HEK293 (cell line): ENCODE measurements at regions of chr9 and their contacts with region 1.

Region 1: GRCh38 chr9:129177791-129178559 is at the start of gene IER5L:
- H3K4me3 ChIP-seq: peak within 1 kb of the TSS; percentile 64
- H3K27ac ChIP-seq: peak within 1 kb of the TSS; percentile 65; the same call in 1 of the 2 replicates
- H3K4me1 ChIP-seq: peaks cover 7% of the 10 kb centered on the region
- CTCF ChIP-seq: peak; percentile 73

Region 2: GRCh38 chr9:128881901-128882681 is 295.9 kb before region 1 on chr9 and contains the starts of genes KYAT1 and LRRC8A:
- CTCF ChIA-PET with region 1: no interaction called
- POLR2A ChIA-PET with region 1: no interaction called
- H3K4me3 ChIP-seq: peak within 1 kb of the TSS; percentile 87
- H3K27ac ChIP-seq: peak within 1 kb of the TSS; percentile 55
- H3K4me1 ChIP-seq: no peaks in the 10 kb centered on the region
- CTCF ChIP-seq: no peak

Region 3: GRCh38 chr9:129131300-129132145 is 46.5 kb before region 1 on chr9:
- CTCF ChIA-PET with region 1: interaction called, 34 read pairs
- POLR2A ChIA-PET with region 1: interaction called, 13 read pairs
- H3K4me3 ChIP-seq: no peak overlapping the region
- H3K27ac ChIP-seq: no peak overlapping the region
- H3K4me1 ChIP-seq: no peaks in the 10 kb centered on the region
- CTCF ChIP-seq: peak; percentile 86

Region 4: DNA sequence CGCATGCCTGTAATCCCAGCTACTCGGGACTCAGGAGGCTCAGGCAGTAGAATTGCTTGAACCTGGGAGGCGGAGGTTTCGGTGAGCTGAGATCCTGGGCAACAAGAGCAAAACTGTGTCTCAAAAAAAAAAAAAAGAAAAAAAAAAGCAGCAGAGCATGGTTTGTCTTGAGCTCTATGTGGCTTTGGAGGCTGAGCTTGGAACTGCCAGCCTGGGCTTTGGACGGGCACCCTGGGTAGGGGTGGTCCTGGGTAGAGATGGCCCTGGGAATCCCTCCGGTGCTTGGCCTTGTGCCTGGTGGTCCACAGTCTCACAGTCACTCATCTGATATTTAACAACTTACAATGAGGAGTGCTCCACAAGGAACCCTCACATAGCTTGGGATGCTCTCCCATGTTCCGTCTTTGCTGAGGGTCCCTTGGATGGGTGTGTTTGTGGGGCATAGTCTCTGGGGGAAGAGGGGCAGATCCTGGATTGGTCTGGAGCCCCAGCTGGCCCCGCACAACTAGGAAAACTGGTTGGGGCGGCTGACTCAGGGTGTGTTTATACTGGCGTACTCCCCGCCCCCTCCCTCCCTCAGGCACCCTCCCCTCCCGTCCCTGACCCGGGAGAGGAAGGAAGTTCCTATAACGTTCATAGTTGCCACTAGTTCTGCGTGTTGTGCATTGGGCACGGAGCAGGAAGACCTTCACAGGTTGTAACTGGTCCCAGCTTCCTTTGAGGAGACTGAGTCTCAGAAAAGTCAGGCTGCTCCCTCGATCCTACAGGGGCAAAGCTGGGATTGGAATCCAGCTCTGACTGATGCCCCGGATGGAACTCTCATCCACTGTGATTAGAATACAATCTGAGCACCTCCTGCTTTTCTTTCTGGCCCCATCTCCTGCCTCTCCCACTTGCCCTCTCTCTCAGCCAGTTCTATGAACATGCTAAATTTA is 11.1 kb before region 1 on chr9:
- CTCF ChIA-PET with region 1: interaction called, 22 read pairs
- POLR2A ChIA-PET with region 1: interaction called, 19 read pairs
- H3K4me3 ChIP-seq: peak overlapping the region; percentile 0; the same call in 1 of the 2 replicates
- H3K27ac ChIP-seq: no peak overlapping the region
- H3K4me1 ChIP-seq: no peaks in the 10 kb centered on the region; the same call in 1 of the 2 replicates
- CTCF ChIP-seq: no peak

Region 5: GRCh38 chr9:129237195-129237611 is 59.2 kb after region 1 on chr9:
- CTCF ChIA-PET with region 1: interaction called, 6 read pairs
- POLR2A ChIA-PET with region 1: interaction called, 10 read pairs
- H3K4me3 ChIP-seq: no peak overlapping the region
- H3K27ac ChIP-seq: no peak overlapping the region
- H3K4me1 ChIP-seq: no peaks in the 10 kb centered on the region
- CTCF ChIP-seq: no peak

Region 6: GRCh38 chr9:129333953-129334724 is 156.2 kb after region 1 on chr9:
- CTCF ChIA-PET with region 1: interaction called, 5 read pairs
- POLR2A ChIA-PET with region 1: interaction called, 21 read pairs
- H3K4me3 ChIP-seq: peak overlapping the region; percentile 10; the same call in 1 of the 2 replicates
- H3K27ac ChIP-seq: peak overlapping the region; percentile 4; the same call in 1 of the 2 replicates
- H3K4me1 ChIP-seq: no peaks in the 10 kb centered on the region; the same call in 1 of the 2 replicates
- CTCF ChIP-seq: 0 out of 2 replicates have a peak, but pooled peaks have one; percentile 16

Region 7: DNA sequence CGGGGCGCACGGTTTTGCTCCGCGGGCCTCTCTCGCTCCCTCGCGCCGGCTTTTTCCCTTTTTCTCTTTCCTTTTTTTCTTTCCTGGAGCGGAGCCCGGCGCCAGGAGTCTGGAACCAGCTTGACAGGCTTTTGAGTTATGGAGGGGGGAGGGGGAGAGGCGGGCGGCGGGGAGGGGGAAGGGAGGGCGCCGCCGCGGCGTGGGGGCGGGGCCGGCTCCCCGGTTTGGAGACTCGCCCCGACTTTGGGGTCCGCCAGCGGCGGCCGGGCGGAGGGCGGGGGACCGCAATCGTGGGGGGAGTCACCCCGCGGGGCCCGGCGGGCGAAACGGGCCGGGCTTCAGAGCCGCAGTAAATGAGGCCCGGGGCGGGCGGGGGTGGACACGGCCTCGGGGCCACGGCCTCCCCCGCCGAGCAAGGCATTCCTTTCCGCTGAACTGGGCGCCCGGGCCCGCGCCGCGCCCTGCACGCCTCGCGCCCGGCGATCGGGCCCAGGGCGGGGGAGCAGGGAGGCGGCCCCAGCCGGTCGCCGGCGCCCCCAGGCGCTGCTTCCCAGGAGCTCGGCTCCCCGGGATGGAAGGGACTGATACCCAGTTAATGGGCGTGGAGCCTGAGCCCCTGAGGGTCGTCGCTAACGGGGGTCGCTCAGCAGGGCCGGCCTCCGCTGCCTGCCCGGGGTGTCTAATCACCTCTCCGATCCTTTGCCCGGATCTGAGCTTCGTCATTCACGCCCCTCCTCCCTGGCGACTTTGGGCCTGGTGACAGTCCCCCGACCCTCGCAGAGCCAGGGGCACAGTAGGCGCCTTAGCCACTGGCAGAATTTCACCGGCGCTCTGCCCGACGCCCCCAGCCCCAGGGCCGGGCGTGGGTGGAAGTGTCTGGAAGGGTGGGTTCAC is 304.8 kb after region 1 on chr9:
- CTCF ChIA-PET with region 1: interaction called, 4 read pairs
- POLR2A ChIA-PET with region 1: interaction called, 20 read pairs
- H3K4me3 ChIP-seq: peak overlapping the region; percentile 29
- H3K27ac ChIP-seq: peak overlapping the region; percentile 87
- H3K4me1 ChIP-seq: no peaks in the 10 kb centered on the region; the same call in 1 of the 2 replicates
- CTCF ChIP-seq: no peak

Region 8: DNA sequence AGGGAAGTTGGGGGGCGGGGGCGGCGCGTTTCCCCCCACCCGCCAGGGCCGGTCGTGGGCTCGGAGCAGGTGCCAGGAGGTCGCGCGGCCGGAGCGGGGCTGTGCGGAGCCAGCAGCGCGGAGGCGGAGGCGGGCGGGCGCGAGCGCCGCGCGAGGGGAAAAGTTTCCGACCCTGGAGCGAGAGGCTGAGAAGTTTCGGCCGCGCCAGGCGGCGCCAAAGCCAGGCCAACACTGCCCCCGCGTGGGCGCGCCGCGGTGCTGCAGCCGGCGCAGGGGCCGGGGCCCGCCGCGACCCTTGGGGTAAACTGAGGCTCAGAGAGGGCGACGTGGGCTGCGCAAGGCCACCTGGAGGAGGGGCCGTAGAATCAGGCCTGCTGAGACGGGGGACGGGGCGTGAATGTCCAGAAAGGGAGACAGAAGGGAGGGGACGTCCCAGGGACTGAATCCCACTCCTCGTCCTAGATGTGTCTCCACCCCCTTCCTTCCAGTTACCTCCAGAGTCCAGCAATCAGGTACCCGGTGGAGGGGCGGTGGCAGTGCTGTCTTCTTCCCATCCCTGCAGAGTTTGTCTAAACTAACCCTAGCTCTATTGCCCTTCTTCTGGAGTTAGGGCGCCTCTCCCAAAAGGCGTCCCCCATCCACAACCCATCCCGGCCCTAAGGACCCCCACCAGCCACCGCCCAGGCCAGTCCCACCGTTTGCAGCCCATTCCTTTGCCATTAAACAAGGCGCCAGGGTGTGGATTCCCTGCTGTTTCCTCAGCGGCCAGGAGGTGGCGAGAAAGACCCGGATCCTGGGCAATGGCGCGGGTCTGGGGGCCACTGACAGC is 432.7 kb after region 1 on chr9:
- CTCF ChIA-PET with region 1: interaction called, 18 read pairs
- POLR2A ChIA-PET with region 1: interaction called, 7 read pairs
- H3K4me3 ChIP-seq: peak overlapping the region; percentile 44
- H3K27ac ChIP-seq: peak overlapping the region; percentile 49; the same call in 1 of the 2 replicates
- H3K4me1 ChIP-seq: no peaks in the 10 kb centered on the region; the same call in 1 of the 2 replicates
- CTCF ChIP-seq: peak; percentile 76; the same call in 1 of the 2 replicates

Region 9: GRCh38 chr9:129822898-129823541 is 645.0 kb after region 1 on chr9:
- CTCF ChIA-PET with region 1: no interaction called
- POLR2A ChIA-PET with region 1: no interaction called
- H3K4me3 ChIP-seq: peak overlapping the region; percentile 98
- H3K27ac ChIP-seq: peak overlapping the region; percentile 49; the same call in 1 of the 2 replicates
- H3K4me1 ChIP-seq: no peaks in the 10 kb centered on the region
- CTCF ChIP-seq: no peak